Tibial artery (tissue), 4 donors: ENCODE measurements at regions of chr6 and their contacts with region 1.

Region 1: GRCh38 chr6:99416892-99417767 is 8.0 kb downstream of the PNISR start:
- DNase-seq: no peak
- H3K4me3 ChIP-seq: no peak overlapping the region
- H3K27ac ChIP-seq: no peak overlapping the region
- H3K4me1 ChIP-seq: peaks cover 0 to 91% (median 18%) of the 10 kb centered on the region in 4 donors
- H3K27me3 ChIP-seq: no peaks in the 10 kb centered on the region
- CTCF ChIP-seq: no peak

Region 2: DNA sequence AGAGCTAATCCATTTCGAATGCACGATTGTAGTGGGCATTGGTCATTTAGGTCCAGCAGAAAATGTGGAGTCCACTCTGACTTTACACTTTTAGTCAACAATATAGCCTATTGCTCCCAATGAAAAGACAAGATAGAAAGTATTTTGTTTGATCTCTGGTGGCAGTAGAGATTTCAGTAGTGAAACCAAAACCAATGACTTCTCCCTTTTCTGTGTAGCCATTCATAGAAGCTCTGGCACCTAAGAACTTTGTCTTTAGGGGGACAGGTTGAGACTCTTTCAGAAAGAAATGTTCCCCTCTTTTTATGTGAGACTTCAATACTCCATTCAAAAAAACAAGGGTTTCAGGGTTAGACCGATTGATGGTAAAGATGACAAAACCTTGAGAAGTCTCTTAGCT is 1093.5 kb before region 1 on chr6:
- intact Hi-C with region 1: no loop called
- DNase-seq: no peak
- H3K4me3 ChIP-seq: no peak overlapping the region
- H3K27ac ChIP-seq: no peak overlapping the region
- H3K4me1 ChIP-seq: no peaks in the 10 kb centered on the region
- H3K27me3 ChIP-seq: no peaks in the 10 kb centered on the region
- CTCF ChIP-seq: no peak

Region 3: DNA sequence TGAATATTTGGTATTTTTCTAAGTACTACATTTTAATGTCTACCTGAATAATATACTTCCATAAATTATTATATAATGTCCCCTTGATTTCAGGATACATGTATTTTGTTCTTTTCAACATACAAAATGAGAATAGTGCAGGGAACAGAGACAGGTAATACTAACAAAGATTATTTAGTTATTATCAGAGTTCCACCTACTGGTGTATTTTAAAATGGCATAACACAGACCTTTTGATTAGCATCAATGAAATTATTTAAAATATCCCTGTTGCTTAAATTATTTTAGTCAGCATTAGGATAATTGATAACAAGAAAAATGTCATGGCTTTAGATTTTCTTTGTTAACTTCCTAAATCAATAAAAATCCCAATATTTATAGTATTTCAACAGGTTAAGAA is 373.5 kb after region 1 on chr6:
- intact Hi-C with region 1: no loop called
- DNase-seq: no peak
- H3K4me3 ChIP-seq: no peak overlapping the region
- H3K27ac ChIP-seq: no peak overlapping the region
- H3K4me1 ChIP-seq: no peaks in the 10 kb centered on the region
- H3K27me3 ChIP-seq: no peaks in the 10 kb centered on the region
- CTCF ChIP-seq: no peak

Region 4: GRCh38 chr6:100455230-100456124 is 1038.3 kb after region 1 on chr6:
- intact Hi-C with region 1: loop called (anchors 5 kb)
- DNase-seq: no peak
- H3K4me3 ChIP-seq: no peak overlapping the region
- H3K27ac ChIP-seq: no peak overlapping the region
- H3K4me1 ChIP-seq: peaks cover 0 to 21% (median 10%) of the 10 kb centered on the region in 4 donors
- H3K27me3 ChIP-seq: peaks cover 18 to 92% of the 10 kb centered on the region in 2 donors
- CTCF ChIP-seq: no peak